Spleen (tissue), 13 donors: ENCODE measurements at regions of chr17 and their contacts with region 1.

Region 1: GRCh38 chr17:28252436-28252835 is 66.6 kb upstream of the TMEM97 start:
- DNase-seq: no peak
- H3K4me3 ChIP-seq: no peak overlapping the region
- H3K27ac ChIP-seq: no peak overlapping the region
- H3K4me1 ChIP-seq: peaks cover 10 to 13% (median 11%) of the 10 kb centered on the region in 6 donors
- H3K27me3 ChIP-seq: peaks cover 0 to 71% (median 22%) of the 10 kb centered on the region in 7 donors
- CTCF ChIP-seq: no peak
- POLR2A ChIP-seq: no peak

Region 2: GRCh38 chr17:27805520-27806146 is 446.8 kb before region 1 on chr17:
- intact Hi-C with region 1: loop called (anchors 10 kb)
- DNase-seq: peak; percentile 86
- H3K4me3 ChIP-seq: peak overlapping the region in 7 of 8 donors; percentile 2 to 63 (median 31)
- H3K27ac ChIP-seq: peak overlapping the region in 7 of 8 donors; percentile 51 to 79 (median 74)
- H3K4me1 ChIP-seq: peaks cover 10 to 41% (median 35%) of the 10 kb centered on the region in 6 donors
- H3K27me3 ChIP-seq: no peaks in the 10 kb centered on the region
- CTCF ChIP-seq: peak; percentile 80 to 96 (median 86)
- POLR2A ChIP-seq: no peak

Region 3: GRCh38 chr17:27892866-27893769 is 359.3 kb before region 1 on chr17 and contains the start of gene LYRM9:
- intact Hi-C with region 1: loop called (anchors 10 kb)
- DNase-seq: peak; percentile 99
- H3K4me3 ChIP-seq: peak within 1 kb of the TSS; percentile 55 to 82 (median 67)
- H3K27ac ChIP-seq: peak within 1 kb of the TSS; percentile 76 to 92 (median 89)
- H3K4me1 ChIP-seq: peaks cover 10 to 34% (median 24%) of the 10 kb centered on the region in 6 donors
- H3K27me3 ChIP-seq: no peaks in the 10 kb centered on the region
- CTCF ChIP-seq: peak; percentile 54 to 95 (median 93)
- POLR2A ChIP-seq: peak in 1 of 3 donors; percentile 52
- total RNA-seq, gene LYRM9: 6.8 to 20.0 (median 15.4) TPM